Upper lobe of right lung (tissue), 1 donor: ENCODE measurements at regions of chr4 and their contacts with region 1.

Region 1: GRCh38 chr4:48008021-48008596 is 8.4 kb downstream of the CNGA1 start:
- DNase-seq: no peak
- ATAC-seq: no peak
- H3K4me3 ChIP-seq: no peak overlapping the region
- H3K27ac ChIP-seq: no peak overlapping the region
- H3K4me1 ChIP-seq: no peaks in the 10 kb centered on the region
- H3K27me3 ChIP-seq: no peaks in the 10 kb centered on the region
- CTCF ChIP-seq: no peak

Region 2: GRCh38 chr4:47762376-47763266 is 245.5 kb before region 1 on chr4:
- intact Hi-C with region 1: no loop called
- DNase-seq: no peak
- ATAC-seq: no peak
- H3K4me3 ChIP-seq: no peak overlapping the region
- H3K27ac ChIP-seq: no peak overlapping the region
- H3K4me1 ChIP-seq: no peaks in the 10 kb centered on the region
- H3K27me3 ChIP-seq: no peaks in the 10 kb centered on the region
- CTCF ChIP-seq: no peak

Region 3: DNA sequence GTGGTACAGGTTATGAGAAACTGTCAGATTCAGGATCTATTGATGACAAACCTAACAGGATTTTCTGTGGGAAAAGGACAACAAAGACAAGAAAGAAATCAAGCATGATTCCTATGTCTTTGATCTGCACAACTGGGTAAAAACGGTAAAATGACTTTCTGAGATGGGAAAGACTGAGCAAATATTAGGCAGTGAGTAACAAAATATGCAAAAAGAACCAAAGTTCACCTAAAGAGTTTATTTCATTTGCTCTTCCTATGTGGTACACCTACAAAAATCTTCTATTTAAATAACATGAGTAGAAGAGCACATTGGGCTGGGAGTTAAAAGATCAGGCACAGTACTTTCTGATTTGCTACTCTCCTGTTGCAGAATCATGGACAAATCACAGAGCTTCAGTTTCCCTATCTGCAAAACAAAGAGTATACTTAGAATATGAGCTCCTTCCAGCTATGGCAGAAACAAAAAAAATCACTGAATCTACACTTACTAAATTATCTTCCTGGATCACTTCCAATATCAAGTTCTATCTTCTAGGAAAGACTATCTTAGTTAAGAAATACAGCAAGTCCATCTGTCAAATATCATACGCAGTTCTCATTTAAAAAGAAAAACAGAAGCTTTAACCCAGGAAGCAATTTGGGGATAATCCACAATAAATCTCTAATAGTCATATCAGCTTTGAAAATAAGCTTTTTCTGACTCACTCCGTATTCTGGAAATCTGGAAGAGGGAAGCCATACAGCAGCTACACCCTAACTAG is 131.1 kb before region 1 on chr4:
- intact Hi-C with region 1: no loop called
- DNase-seq: no peak
- ATAC-seq: no peak
- H3K4me3 ChIP-seq: no peak overlapping the region
- H3K27ac ChIP-seq: no peak overlapping the region
- H3K4me1 ChIP-seq: no peaks in the 10 kb centered on the region
- H3K27me3 ChIP-seq: no peaks in the 10 kb centered on the region
- CTCF ChIP-seq: no peak

Region 4: GRCh38 chr4:48079972-48080391 is 71.9 kb after region 1 on chr4:
- intact Hi-C with region 1: loop called (anchors 10 kb)
- DNase-seq: no peak
- ATAC-seq: peak; percentile 54
- H3K4me3 ChIP-seq: no peak overlapping the region
- H3K27ac ChIP-seq: no peak overlapping the region
- H3K4me1 ChIP-seq: no peaks in the 10 kb centered on the region
- H3K27me3 ChIP-seq: no peaks in the 10 kb centered on the region
- CTCF ChIP-seq: no peak